CD4-positive, alpha-beta T cell (primary cell): ENCODE measurements at regions of chr15 and their contacts with region 1.

Region 1: DNA sequence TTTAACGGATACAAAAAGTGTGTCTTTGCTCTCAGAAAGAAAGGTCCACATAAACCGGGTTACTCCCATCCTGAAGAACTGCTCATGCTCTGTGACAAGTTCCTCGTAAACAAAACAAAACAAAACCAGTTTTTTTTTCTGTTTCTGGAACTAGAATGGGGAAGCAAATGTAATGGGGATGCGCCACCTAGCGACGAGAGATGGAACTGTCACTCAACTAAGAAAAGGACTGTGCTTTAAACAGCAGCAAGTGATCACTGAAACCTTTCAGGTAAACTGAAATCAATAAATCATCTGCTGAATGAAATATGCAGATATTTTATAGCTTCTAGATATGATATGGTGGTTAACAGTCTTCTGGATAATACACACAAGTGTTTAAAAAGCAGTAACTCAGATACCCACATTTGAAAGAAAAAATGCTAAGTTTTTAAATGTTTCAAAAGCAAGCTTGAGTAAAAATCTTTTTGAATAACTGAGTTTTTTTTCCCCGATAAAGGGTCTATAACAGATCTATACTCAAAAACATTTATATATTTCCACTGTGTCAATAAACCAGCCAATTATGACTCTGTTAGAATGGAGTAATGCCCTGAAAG is 10.9 kb downstream of the TM2D3 start:
- DNase-seq: peak; percentile 62 to 90 (median 72)
- ATAC-seq: peak; percentile 66
- H3K4me3 ChIP-seq: no peak overlapping the region
- H3K4me3 Mint-ChIP-seq: no peak overlapping the region
- H3K27ac ChIP-seq: peak overlapping the region; percentile 43 to 74
- H3K27ac Mint-ChIP-seq: peak overlapping the region; percentile 71
- H3K4me1 ChIP-seq: peaks cover 18% of the 10 kb centered on the region
- H3K4me1 Mint-ChIP-seq: peaks cover 42% of the 10 kb centered on the region
- H3K27me3 ChIP-seq: no peaks in the 10 kb centered on the region
- H3K27me3 Mint-ChIP-seq: no peaks in the 10 kb centered on the region
- CTCF ChIP-seq: peak; percentile 98

Region 2: GRCh38 chr15:101008158-101009139 is 632.8 kb before region 1 on chr15:
- CTCF ChIA-PET with region 1: no interaction called
- POLR2A ChIA-PET with region 1: no interaction called
- intact Hi-C with region 1: loop called in 1 of 2 experiments (anchors 10 kb)
- DNase-seq: peak; percentile 76 to 93 (median 84)
- ATAC-seq: peak; percentile 97
- H3K4me3 ChIP-seq: peak overlapping the region; percentile 69
- H3K4me3 Mint-ChIP-seq: peak overlapping the region; percentile 94
- H3K27ac ChIP-seq: no peak overlapping the region
- H3K27ac Mint-ChIP-seq: peak overlapping the region; percentile 65
- H3K4me1 ChIP-seq: peaks cover 22% of the 10 kb centered on the region
- H3K4me1 Mint-ChIP-seq: peaks cover 24% of the 10 kb centered on the region
- H3K27me3 ChIP-seq: no peaks in the 10 kb centered on the region
- H3K27me3 Mint-ChIP-seq: peaks cover 6% of the 10 kb centered on the region
- CTCF ChIP-seq: peak; percentile 99

Region 3: DNA sequence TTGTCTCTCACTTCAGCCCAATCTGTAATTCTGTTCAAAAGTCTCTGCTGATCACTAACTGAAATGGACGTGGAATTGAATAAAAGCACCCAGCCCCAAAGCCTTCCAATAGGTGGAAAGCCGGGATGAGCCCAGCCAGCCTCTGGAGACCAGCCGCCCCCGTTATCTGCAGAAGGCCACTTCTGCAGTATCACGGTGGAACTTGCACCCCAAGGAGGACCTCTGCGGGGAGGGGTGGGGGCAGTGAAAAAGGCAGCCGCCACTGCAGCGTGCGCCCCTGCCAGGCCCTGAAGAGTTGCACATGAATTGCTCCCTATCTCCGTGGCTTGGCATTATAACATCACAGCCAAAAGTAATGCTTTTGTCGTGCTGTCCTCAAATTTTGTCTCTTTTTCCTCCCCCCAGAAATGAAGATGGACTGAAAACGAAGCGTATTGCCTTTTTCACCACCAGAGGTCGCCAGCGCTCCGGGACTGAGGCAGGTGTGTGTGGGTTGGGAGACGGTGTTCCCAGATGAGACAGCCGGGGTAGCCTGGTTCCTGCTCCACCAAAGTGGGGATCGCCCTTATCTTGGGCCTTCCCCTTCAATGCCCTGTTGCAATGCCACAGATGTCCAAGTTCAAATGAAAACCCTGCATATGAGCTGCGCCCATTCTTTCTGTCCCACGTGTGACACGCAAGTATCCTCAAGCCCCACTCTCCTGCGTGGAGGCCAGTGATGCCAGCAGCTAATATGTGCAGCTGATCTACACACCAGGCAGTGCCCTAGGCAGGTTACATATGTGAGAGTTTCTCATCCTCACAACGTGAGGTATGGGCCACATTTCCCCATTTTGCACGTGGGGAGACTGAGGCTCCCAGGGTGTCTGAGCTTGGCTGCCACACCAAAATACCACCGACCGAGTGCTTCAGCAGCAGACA is 626.1 kb before region 1 on chr15:
- CTCF ChIA-PET with region 1: no interaction called
- POLR2A ChIA-PET with region 1: no interaction called
- intact Hi-C with region 1: loop called in 1 of 2 experiments (anchors 5 kb)
- DNase-seq: peak; percentile 48 to 78 (median 57)
- ATAC-seq: no peak
- H3K4me3 ChIP-seq: no peak overlapping the region
- H3K4me3 Mint-ChIP-seq: no peak overlapping the region
- H3K27ac ChIP-seq: no peak overlapping the region
- H3K27ac Mint-ChIP-seq: no peak overlapping the region
- H3K4me1 ChIP-seq: no peaks in the 10 kb centered on the region
- H3K4me1 Mint-ChIP-seq: no peaks in the 10 kb centered on the region
- H3K27me3 ChIP-seq: no peaks in the 10 kb centered on the region
- H3K27me3 Mint-ChIP-seq: no peaks in the 10 kb centered on the region
- CTCF ChIP-seq: peak; percentile 75

Region 4: GRCh38 chr15:101088788-101089583 is 552.3 kb before region 1 on chr15:
- CTCF ChIA-PET with region 1: no interaction called
- POLR2A ChIA-PET with region 1: no interaction called
- intact Hi-C with region 1: loop called in 1 of 2 experiments (anchors 2 kb)
- DNase-seq: peak; percentile 49 to 88 (median 76)
- ATAC-seq: peak; percentile 96
- H3K4me3 ChIP-seq: no peak overlapping the region
- H3K4me3 Mint-ChIP-seq: no peak overlapping the region
- H3K27ac ChIP-seq: no peak overlapping the region
- H3K27ac Mint-ChIP-seq: no peak overlapping the region
- H3K4me1 ChIP-seq: peaks cover 7% of the 10 kb centered on the region
- H3K4me1 Mint-ChIP-seq: no peaks in the 10 kb centered on the region
- H3K27me3 ChIP-seq: peaks cover 0 to 5% of the 10 kb centered on the region in 2 experiments
- H3K27me3 Mint-ChIP-seq: no peaks in the 10 kb centered on the region
- CTCF ChIP-seq: peak; percentile 91

Region 5: DNA sequence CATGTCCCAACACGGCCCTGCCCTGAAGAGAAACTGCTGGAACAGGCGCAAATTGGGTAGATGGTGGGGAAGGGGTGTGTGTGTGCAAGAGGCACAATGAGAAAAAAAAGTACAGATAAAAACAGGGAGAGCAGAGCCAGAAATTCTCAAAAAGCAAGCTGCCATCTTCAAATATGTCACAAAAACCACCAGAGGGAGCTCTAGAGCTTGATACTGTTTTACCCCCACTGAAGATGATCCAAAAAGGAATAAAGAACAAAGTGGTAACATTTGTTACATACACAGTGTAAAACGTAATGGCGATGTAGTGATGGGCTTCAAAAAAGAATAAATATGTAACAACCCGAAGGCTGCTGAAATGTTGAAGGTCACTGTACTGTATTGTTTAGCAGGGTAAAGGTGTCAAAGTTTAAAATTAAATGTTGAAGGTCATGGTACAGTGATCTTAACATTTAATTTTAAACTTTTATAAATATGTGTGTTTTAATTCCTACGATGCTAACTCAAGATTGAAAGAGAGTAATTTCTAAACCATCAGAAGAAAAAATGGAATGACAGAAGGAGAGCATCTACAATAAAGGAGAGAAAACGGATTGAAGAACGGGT is 352.3 kb before region 1 on chr15:
- CTCF ChIA-PET with region 1: interaction called, 18 read pairs
- POLR2A ChIA-PET with region 1: interaction called, 28 read pairs
- intact Hi-C with region 1: no loop called
- DNase-seq: peak in 4 of 14 experiments; percentile 24 to 78 (median 72)
- ATAC-seq: peak; percentile 78
- H3K4me3 ChIP-seq: no peak overlapping the region
- H3K4me3 Mint-ChIP-seq: peak overlapping the region; percentile 39
- H3K27ac ChIP-seq: no peak overlapping the region
- H3K27ac Mint-ChIP-seq: peak overlapping the region; percentile 21
- H3K4me1 ChIP-seq: peaks cover 26% of the 10 kb centered on the region
- H3K4me1 Mint-ChIP-seq: peaks cover 58% of the 10 kb centered on the region
- H3K27me3 ChIP-seq: no peaks in the 10 kb centered on the region
- H3K27me3 Mint-ChIP-seq: no peaks in the 10 kb centered on the region
- CTCF ChIP-seq: peak; percentile 82

Region 6: GRCh38 chr15:101652098-101652782 is 11.0 kb after region 1 on chr15 and contains the start of gene TM2D3:
- CTCF ChIA-PET with region 1: interaction called, 13 read pairs
- POLR2A ChIA-PET with region 1: interaction called, 33 read pairs
- intact Hi-C with region 1: no loop called
- DNase-seq: peak; percentile 89 to 99 (median 94)
- ATAC-seq: peak; percentile 94
- H3K4me3 ChIP-seq: peak within 1 kb of the TSS; percentile 82
- H3K4me3 Mint-ChIP-seq: peak within 1 kb of the TSS; percentile 97
- H3K27ac ChIP-seq: peak within 1 kb of the TSS; percentile 96
- H3K27ac Mint-ChIP-seq: peak within 1 kb of the TSS; percentile 98
- H3K4me1 ChIP-seq: peaks cover 24% of the 10 kb centered on the region
- H3K4me1 Mint-ChIP-seq: peaks cover 48% of the 10 kb centered on the region
- H3K27me3 ChIP-seq: no peaks in the 10 kb centered on the region
- H3K27me3 Mint-ChIP-seq: no peaks in the 10 kb centered on the region
- CTCF ChIP-seq: peak; percentile 82
- total RNA-seq, gene TM2D3: 102 to 107 TPM

Region 7: DNA sequence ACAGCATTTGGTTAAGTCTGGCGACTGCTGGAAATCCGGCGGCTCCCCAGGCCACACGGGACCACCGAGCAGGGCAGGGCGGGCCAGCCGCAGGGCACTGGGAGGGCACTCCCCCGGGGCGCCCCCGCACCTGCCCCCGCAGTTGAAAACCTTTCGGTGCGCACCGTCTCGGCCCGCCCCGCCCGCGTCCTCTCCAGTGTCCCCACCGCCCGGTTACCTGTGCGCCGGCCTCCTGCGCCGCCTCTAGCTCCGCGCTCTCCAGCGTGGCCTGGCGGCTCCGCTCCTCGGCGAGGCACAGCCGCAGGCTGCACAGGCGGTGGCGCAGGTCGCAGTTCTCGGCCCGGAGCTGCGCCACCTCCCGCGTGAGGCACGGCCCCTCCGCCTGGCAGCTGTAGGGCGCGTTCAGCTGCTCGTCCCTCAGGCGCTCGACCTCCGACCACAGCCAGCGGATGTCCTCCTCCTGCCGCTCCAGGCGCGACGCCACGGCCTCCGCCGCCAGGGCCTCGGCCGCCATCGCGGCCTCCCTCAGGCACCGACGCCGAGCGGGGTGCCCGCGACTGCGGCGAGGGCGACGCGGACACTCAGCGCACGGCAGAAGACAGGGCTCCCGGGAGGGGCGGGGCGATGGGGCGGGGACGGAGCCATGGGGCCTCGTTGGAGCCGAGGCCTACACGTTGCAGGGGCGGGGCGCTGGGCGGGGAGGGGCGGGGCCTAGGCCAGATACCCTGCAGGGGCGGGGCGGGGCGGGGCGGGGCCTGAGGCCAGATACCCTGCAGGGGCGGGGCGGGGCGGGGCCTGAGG is 82.8 kb after region 1 on chr15 and contains the start of gene TARS3:
- CTCF ChIA-PET with region 1: interaction called, 6 read pairs
- POLR2A ChIA-PET with region 1: interaction called, 13 read pairs
- intact Hi-C with region 1: no loop called
- DNase-seq: peak; percentile 93 to 100 (median 97)
- ATAC-seq: peak; percentile 92
- H3K4me3 ChIP-seq: peak within 1 kb of the TSS; percentile 64
- H3K4me3 Mint-ChIP-seq: peak within 1 kb of the TSS; percentile 89
- H3K27ac ChIP-seq: peak within 1 kb of the TSS; percentile 61 to 81
- H3K27ac Mint-ChIP-seq: peak within 1 kb of the TSS; percentile 87
- H3K4me1 ChIP-seq: peaks cover 20% of the 10 kb centered on the region
- H3K4me1 Mint-ChIP-seq: peaks cover 42% of the 10 kb centered on the region
- H3K27me3 ChIP-seq: no peaks in the 10 kb centered on the region
- H3K27me3 Mint-ChIP-seq: no peaks in the 10 kb centered on the region
- CTCF ChIP-seq: peak; percentile 38
- total RNA-seq, gene TARS3: 16.6 to 18.1 TPM